AG04450 (cell line): ENCODE measurements at regions of chr12 and their contacts with region 1.

Region 1: GRCh38 chr12:56117778-56118687 is at the start of gene ZC3H10:
- DNase-seq: peak; percentile 99
- H3K4me3 ChIP-seq: peak within 1 kb of the TSS; percentile 93
- H3K27ac ChIP-seq: peak within 1 kb of the TSS; percentile 90
- H3K27me3 ChIP-seq: no peaks in the 10 kb centered on the region
- CTCF ChIP-seq: peak; percentile 62
- polyA plus RNA-seq, gene ZC3H10: 1.5 and 1.9 TPM in 2 replicates

Region 2: DNA sequence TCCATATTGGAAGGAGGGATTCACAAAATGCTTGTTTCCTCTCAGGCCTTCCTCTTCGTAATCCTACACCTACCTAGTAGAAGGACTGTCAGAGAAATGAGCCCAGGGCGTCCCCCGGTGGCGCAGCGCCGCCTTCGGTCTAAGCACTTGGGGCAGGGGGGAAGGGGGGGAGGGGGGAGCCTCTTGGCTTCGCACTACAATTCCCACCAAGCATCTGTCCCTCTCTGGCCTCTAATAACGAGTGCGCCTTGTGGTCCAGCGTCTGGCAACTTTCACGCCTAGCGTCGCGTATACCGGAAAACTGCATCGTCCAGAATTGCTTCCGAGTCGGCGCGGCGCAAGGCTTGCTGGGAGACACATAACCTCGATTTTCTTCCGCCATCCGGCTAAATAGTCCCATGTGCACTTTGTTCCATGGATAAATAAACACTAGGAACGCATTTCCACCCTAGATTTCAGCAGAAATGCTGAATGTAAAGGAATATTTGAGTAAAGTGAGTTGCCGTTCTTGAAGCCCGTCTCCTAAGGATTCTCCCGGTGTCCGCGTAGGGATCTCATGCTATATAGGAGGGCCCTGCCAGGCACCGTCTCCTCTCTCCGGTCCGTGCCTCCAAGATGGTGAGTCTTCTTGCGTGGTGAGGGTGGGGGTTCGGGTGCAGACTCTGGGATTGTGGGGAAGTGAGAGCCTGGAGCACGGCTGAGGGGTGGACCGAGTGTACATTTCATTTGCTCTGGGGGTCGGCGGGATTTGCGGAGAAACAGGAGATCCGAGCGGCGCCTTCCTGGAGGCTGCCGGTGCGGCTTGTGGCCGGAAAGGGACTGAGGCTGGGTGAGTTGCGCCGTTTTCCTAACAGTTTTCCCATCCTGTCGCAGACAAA is 76.2 kb before region 1 on chr12 and contains the start of gene RPS26:
- CTCF ChIA-PET with region 1: interaction called, 11 read pairs
- POLR2A ChIA-PET with region 1: interaction called, 7 read pairs
- DNase-seq: peak; percentile 99
- H3K4me3 ChIP-seq: peak within 1 kb of the TSS; percentile 92
- H3K27ac ChIP-seq: peak within 1 kb of the TSS; percentile 92
- H3K27me3 ChIP-seq: no peaks in the 10 kb centered on the region
- CTCF ChIP-seq: peak; percentile 46
- polyA plus RNA-seq, gene RPS26: 348 and 382 TPM in 2 replicates

Region 3: GRCh38 chr12:56127888-56128669 is 10.0 kb after region 1 on chr12 and contains the start of gene ESYT1:
- CTCF ChIA-PET with region 1: interaction called, 7 read pairs
- POLR2A ChIA-PET with region 1: interaction called, 40 read pairs
- DNase-seq: peak; percentile 99
- H3K4me3 ChIP-seq: peak within 1 kb of the TSS; percentile 90
- H3K27ac ChIP-seq: peak within 1 kb of the TSS; percentile 78
- H3K27me3 ChIP-seq: no peaks in the 10 kb centered on the region
- CTCF ChIP-seq: no peak
- polyA plus RNA-seq, gene ESYT1: 127 and 140 TPM in 2 replicates